Psoas muscle (tissue), 8 donors: ENCODE measurements at regions of chr5 and their contacts with region 1.

Region 1: DNA sequence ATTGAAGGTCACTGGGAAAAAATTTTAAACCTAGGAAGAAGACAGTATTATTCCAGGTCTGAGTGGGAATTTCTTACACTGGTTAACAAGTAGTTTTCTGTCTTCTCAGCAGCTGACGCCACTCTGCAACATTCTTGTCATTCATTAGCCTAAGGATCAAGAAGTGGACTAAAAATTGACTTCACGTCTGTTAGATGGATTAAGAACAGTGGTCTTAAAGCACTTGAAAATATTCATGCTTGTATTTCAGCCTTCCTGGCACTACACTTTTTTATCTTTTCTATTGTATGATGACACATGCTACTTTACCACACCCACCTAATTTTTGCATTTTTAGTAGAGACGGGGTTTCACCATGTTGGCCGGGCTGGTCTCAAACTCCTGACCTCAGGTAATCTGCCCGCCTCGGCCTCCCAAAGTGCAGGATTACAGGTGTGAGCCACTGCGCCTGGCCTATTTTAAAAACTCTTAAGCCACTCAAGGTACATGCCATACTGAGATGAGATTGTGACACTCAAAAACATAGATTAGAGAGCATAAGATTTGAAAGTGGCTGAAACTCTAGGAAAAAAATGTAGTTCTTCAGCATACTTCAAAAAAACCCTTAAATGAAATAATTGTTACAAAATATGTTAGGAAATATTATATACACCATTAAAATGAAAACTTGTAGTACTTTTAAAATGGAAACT is 8.4 kb downstream of the MATR3 start:
- DNase-seq: no peak
- ATAC-seq: no peak
- H3K4me3 ChIP-seq: no peak overlapping the region
- H3K27ac ChIP-seq: no peak overlapping the region
- H3K4me1 ChIP-seq: peaks cover 92% of the 10 kb centered on the region
- H3K27me3 ChIP-seq: no peaks in the 10 kb centered on the region
- CTCF ChIP-seq: no peak

Region 2: GRCh38 chr5:139335811-139336210 is 33.9 kb after region 1 on chr5:
- intact Hi-C with region 1: loop called (anchors 5 kb)
- DNase-seq: no peak
- ATAC-seq: peak in 1 of 4 donors; percentile 34
- H3K4me3 ChIP-seq: no peak overlapping the region
- H3K27ac ChIP-seq: no peak overlapping the region
- H3K4me1 ChIP-seq: no peaks in the 10 kb centered on the region
- H3K27me3 ChIP-seq: no peaks in the 10 kb centered on the region
- CTCF ChIP-seq: no peak

Region 3: DNA sequence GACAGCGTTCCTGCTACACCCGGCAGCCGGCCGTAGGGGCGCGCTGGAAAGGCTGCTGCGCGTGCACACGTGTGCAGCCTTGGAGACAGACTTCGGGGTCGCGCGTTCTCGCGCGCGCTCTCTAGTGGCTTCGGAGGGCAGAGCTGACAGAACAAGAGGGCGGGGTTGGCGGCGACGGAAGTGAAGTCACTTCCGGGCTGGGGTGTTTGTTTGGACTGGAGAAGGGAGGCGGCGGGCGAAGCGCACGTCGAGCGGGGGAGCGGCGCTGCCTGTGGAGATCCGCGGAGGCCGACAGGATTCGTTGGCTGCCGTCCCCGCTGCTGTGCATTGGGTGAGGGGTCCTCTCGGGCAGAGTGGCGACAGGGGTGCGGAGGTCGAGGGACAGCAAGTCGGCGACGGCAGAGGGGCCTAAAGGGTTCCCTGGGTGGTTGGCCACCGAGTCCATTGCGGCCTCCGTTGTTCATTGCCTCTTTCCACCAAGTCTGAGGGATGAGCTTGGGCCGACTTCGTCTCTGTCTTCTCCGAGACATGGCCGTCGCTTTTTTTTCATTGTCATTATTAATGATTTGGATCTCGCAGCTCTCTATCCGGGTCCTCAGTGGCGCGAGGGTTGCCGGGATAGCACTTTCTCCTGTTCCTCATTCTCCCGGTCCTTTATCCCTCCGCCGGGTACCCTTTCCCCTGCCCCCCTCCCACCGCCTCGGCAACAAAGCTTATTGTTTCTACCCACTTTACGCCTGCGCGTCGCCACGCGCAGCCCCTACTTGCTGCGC is 39.9 kb after region 1 on chr5 and contains the start of gene PAIP2:
- intact Hi-C with region 1: loop called (anchors 5 kb)
- DNase-seq: peak; percentile 98 to 99
- ATAC-seq: peak; percentile 96 to 97 (median 96)
- H3K4me3 ChIP-seq: peak within 1 kb of the TSS; percentile 98
- H3K27ac ChIP-seq: peak within 1 kb of the TSS; percentile 100
- H3K4me1 ChIP-seq: peaks cover 25% of the 10 kb centered on the region
- H3K27me3 ChIP-seq: no peaks in the 10 kb centered on the region
- CTCF ChIP-seq: peak; percentile 72
- total RNA-seq, gene PAIP2: 111 to 144 (median 116) TPM